Heart left ventricle (tissue), 16 donors: ENCODE measurements at regions of chr21 and their contacts with region 1.

Region 1: DNA sequence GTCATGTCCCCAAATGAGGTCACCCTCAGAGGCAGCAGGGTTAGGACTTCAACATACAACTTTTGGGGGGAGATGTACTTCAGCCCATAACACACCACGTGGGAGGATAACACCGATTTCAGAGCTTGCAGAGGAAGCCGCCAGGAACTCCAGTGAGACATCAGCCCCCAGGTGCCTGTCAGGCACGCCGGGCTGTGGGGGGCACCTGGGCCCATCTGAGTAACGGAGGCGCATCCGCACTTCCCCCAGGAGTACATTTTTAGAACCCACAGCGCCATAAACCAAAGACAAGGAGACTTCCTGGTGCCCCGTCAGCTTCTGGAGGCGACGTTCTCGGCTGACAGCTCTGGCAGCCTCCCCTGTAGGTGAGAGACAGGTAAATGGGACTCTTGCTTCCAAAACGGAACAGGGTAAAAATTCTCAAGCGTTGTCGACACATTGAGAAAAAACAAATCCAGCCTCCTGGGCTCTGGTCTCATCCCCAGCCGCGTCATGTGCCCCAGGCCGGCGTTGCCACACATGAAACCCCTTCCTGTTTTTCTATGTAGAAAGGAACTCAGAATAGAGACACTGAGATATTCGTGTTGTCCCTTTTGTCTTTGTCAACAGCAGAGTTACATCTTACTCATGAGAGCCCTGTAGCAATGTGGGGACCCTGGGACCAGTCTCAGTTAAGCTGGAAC is 93.3 kb downstream of the PDE9A start:
- DNase-seq: peak in 4 of 5 donors; percentile 40 to 81 (median 58)
- ATAC-seq: peak in 2 of 4 donors; percentile 47 to 56
- H3K4me3 ChIP-seq: peak overlapping the region in 1 of 12 donors; percentile 35
- H3K27ac ChIP-seq: peak overlapping the region in 8 of 12 donors; percentile 3 to 90 (median 49)
- H3K4me1 ChIP-seq: peaks cover 0 to 32% (median 8%) of the 10 kb centered on the region in 12 donors
- H3K27me3 ChIP-seq: no peaks in the 10 kb centered on the region
- CTCF ChIP-seq: no peak
- POLR2A ChIP-seq: no peak

Region 2: DNA sequence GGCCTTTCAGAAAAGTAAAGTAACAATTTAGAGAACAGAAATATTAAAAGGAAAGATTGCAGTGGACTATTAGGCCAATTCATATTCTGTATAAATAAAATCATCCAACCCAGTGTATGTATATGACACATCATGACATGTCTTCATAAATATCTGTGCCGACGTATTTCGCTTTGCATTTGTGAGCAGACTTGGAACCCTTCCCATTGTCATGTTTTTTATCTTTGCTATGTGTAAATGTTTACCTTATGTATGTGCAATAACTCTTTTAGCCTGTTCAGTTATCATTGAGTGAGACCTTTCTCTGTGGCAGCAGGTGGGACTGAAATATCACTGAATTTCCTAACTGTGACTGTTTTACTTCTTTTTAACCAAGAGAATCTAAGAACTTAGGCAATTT is 1488.1 kb before region 1 on chr21:
- intact Hi-C with region 1: no loop called
- DNase-seq: no peak
- ATAC-seq: no peak
- H3K4me3 ChIP-seq: no peak overlapping the region
- H3K27ac ChIP-seq: no peak overlapping the region
- H3K4me1 ChIP-seq: no peaks in the 10 kb centered on the region
- H3K27me3 ChIP-seq: no peaks in the 10 kb centered on the region
- CTCF ChIP-seq: no peak
- POLR2A ChIP-seq: no peak

Region 3: GRCh38 chr21:42677339-42678321 is 69.1 kb before region 1 on chr21:
- intact Hi-C with region 1: loop called in 1 of 10 experiments (anchors 10 kb)
- DNase-seq: peak in 2 of 5 donors; percentile 37 to 49
- ATAC-seq: no peak
- H3K4me3 ChIP-seq: peak overlapping the region in 1 of 12 donors; percentile 2
- H3K27ac ChIP-seq: peak overlapping the region in 2 of 12 donors; percentile 20 to 37
- H3K4me1 ChIP-seq: peaks cover 0 to 34% (median 20%) of the 10 kb centered on the region in 12 donors
- H3K27me3 ChIP-seq: peaks cover 0 to 7% (median 0%) of the 10 kb centered on the region in 9 donors
- CTCF ChIP-seq: no peak
- POLR2A ChIP-seq: no peak

Region 4: GRCh38 chr21:42781150-42781970 is 34.6 kb after region 1 on chr21:
- intact Hi-C with region 1: loop called in 2 of 10 experiments (anchors 5 kb)
- DNase-seq: peak in 2 of 5 donors; percentile 27 to 47
- ATAC-seq: peak in 2 of 4 donors; percentile 14 to 19
- H3K4me3 ChIP-seq: peak overlapping the region in 8 of 12 donors; percentile 22 to 43 (median 35)
- H3K27ac ChIP-seq: peak overlapping the region in 6 of 12 donors; percentile 26 to 93 (median 45)
- H3K4me1 ChIP-seq: peaks cover 0 to 33% (median 24%) of the 10 kb centered on the region in 12 donors
- H3K27me3 ChIP-seq: peaks cover 0 to 29% (median 10%) of the 10 kb centered on the region in 9 donors
- CTCF ChIP-seq: peak in 2 of 12 donors; percentile 11 to 14
- POLR2A ChIP-seq: no peak